Right ventricle myocardium inferior (tissue), 1 donor: ENCODE measurements at regions of chr3 and their contacts with region 1.

Region 1: DNA sequence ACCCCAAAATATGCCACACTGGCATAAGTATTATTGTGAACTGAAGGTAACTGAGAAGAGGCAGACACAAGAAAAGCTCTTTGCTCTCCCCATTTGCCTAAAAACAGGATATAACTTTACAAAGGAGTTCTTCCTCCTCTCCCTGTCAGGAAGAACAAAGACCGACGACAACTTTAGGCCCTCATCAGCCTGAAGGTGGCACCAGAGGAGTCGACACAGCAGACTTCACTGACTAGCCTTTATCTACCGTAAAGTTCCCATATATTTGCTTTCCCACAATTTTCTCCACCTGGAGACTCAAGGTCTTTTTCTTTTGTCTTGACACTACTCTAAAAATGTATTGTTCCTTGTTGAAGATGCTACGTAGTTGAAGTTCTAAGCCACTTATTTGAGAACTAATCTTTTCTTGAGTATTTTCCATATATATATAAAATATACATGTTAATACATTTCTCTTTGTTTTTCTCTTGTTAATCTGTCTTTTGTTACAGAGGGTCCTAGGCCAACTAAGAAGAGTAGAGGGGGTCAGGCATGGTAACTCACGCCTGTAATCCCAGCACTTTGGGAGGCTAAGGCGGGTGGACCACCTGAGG is 16.2 kb upstream of the XIRP1 start:
- DNase-seq: peak; percentile 68
- ATAC-seq: peak; percentile 81

Region 2: GRCh38 chr3:39028546-39028945 is 180.0 kb before region 1 on chr3:
- intact Hi-C with region 1: no loop called
- DNase-seq: no peak
- ATAC-seq: no peak

Region 3: GRCh38 chr3:39260957-39261356 is 52.4 kb after region 1 on chr3:
- intact Hi-C with region 1: loop called (anchors 5 kb)
- DNase-seq: peak; percentile 95
- ATAC-seq: peak; percentile 95

Region 4: GRCh38 chr3:39501968-39502837 is 293.6 kb after region 1 on chr3:
- intact Hi-C with region 1: no loop called
- DNase-seq: peak; percentile 39
- ATAC-seq: no peak